GM12878 (cell line): ENCODE measurements at regions of chr4 and their contacts with region 1.

Region 1: DNA sequence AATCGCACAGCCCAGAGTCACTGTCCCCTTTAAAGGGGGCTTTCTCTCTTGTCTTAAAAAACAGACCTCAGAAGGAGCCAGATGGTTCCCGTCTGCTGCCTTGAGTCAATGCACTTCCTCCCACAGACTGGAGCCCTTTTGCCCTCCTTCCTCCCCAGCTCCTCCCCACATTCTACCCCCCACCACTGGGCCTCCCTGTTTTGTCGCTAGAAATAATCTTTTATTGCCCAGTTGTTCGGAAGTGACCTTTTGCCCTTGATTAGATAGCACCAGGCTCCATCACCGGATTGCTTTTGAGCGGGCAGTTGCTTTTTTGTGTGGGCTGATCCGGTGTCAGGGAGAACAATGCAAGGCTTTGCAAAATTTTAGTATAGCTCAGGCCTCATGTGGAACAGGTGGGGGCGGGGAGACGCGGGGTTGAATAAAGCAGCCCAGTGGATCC is 47.7 kb downstream of the SPRY1 start:
- DNase-seq: peak; percentile 45
- ATAC-seq: peak; percentile 93
- H3K4me3 ChIP-seq: peak overlapping the region; percentile 29; the same call in 1 of the 2 replicates
- H3K27ac ChIP-seq: peak overlapping the region; percentile 43; the same call in 1 of the 2 replicates
- H3K4me1 ChIP-seq: peaks cover 7% of the 10 kb centered on the region
- H3K27me3 ChIP-seq: no peaks in the 10 kb centered on the region
- CTCF ChIP-seq: no peak
- EP300 ChIP-seq: no peak
- POLR2A ChIP-seq: no peak
- RAD21 ChIP-seq: no peak

Region 2: DNA sequence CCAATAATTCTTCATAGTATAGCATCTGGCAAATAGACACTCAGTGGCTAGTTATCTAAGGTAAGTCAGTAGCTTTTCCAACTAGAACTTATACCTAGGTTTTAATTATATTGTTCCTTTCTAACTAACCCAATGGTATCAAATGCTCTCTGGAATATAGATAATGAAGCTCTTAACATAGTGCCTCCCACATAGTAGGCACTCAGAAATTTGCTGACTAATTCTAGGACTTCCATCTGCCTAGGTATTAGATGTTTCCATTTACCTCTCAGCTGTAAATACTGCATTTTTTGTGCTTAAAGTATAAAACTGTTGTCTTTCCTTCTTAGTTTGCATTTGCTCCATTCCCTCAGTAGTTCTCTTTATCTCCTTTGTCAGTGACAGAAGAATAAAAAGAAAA is 262.0 kb before region 1 on chr4:
- CTCF ChIA-PET with region 1: no interaction called
- POLR2A ChIA-PET with region 1: no interaction called
- RAD21 ChIA-PET with region 1: no interaction called
- SMC1A ChIA-PET with region 1: no interaction called
- in situ Hi-C with region 1: no loop called
- intact Hi-C with region 1: no loop called
- DNase-seq: no peak
- ATAC-seq: no peak
- H3K4me3 ChIP-seq: no peak overlapping the region
- H3K27ac ChIP-seq: no peak overlapping the region
- H3K4me1 ChIP-seq: no peaks in the 10 kb centered on the region
- H3K27me3 ChIP-seq: no peaks in the 10 kb centered on the region
- CTCF ChIP-seq: no peak
- EP300 ChIP-seq: no peak
- POLR2A ChIP-seq: no peak
- RAD21 ChIP-seq: no peak

Region 3: GRCh38 chr4:123412091-123412505 is 32.2 kb before region 1 on chr4:
- CTCF ChIA-PET with region 1: interaction called, 6 read pairs
- POLR2A ChIA-PET with region 1: interaction called, 8 read pairs
- RAD21 ChIA-PET with region 1: interaction called, 5 read pairs
- SMC1A ChIA-PET with region 1: interaction called, 12 read pairs
- in situ Hi-C with region 1: no loop called
- intact Hi-C with region 1: no loop called
- DNase-seq: peak; percentile 66
- ATAC-seq: peak; percentile 90
- H3K4me3 ChIP-seq: no peak overlapping the region
- H3K27ac ChIP-seq: peak overlapping the region; percentile 34; the same call in 1 of the 2 replicates
- H3K4me1 ChIP-seq: peaks cover 17% of the 10 kb centered on the region
- H3K27me3 ChIP-seq: no peaks in the 10 kb centered on the region
- CTCF ChIP-seq: no peak
- EP300 ChIP-seq: peak in 1 of 2 experiments; percentile 64; a peak in 2 of 4 replicates
- POLR2A ChIP-seq: no peak
- RAD21 ChIP-seq: no peak

Region 4: GRCh38 chr4:123418351-123418931 is 25.9 kb before region 1 on chr4:
- CTCF ChIA-PET with region 1: interaction called, 3 read pairs
- POLR2A ChIA-PET with region 1: interaction called, 3 read pairs
- RAD21 ChIA-PET with region 1: interaction called, 11 read pairs
- SMC1A ChIA-PET with region 1: interaction called, 11 read pairs
- in situ Hi-C with region 1: no loop called
- intact Hi-C with region 1: no loop called
- DNase-seq: no peak
- ATAC-seq: peak; percentile 93
- H3K4me3 ChIP-seq: no peak overlapping the region
- H3K27ac ChIP-seq: no peak overlapping the region
- H3K4me1 ChIP-seq: peaks cover 9% of the 10 kb centered on the region; the same call in 1 of the 2 replicates
- H3K27me3 ChIP-seq: no peaks in the 10 kb centered on the region
- CTCF ChIP-seq: no peak
- EP300 ChIP-seq: no peak; a peak in 1 of 4 replicates
- POLR2A ChIP-seq: no peak
- RAD21 ChIP-seq: no peak